Panc1 (cell line): ENCODE measurements at regions of chr12 and their contacts with region 1.

Region 1: DNA sequence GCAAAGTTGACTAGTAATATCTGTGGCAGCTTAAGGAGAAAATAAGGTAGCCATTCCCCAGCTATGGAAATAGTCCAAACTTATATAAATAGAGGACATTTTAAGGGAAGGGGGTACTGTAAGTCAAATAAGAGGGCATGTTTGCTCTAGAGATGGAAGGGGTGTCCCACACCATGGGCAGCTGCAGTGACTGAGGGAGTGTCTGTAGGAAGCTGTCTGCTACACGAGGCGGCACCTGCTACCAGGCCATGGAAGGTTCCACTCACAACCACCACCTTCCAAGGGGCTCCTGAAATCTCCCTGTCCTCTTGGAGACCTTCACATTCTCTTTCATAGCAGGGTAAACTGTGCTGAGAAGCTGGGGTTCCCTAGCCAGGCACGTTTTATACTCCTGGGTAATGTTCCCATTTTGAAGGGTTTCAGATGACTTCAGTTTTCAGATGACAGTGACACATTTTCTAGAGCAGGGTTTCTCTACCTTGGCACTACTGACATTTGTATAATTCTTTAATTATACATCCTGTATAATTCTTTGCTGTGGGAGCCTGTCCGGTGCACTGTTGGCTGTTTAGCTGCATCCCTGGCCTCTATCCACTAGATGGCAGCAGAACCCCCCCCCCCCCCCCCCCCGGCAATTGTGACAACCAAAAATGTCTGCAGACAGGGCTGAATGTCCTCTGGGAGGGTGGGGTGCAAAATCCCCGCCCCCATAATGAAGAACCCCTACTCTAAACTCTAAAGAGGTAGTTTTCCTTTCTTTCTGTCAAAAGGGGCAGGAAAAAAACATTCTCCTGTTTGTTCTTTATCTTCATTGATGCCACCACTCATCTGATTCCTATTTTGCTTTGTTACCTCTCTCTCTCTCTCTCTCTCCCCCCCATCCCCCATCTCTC is 11.6 kb upstream of the SMCO2 start:
- DNase-seq: no peak
- ATAC-seq: peak; percentile 89
- H3K4me3 ChIP-seq: no peak overlapping the region
- H3K27ac ChIP-seq: no peak overlapping the region
- H3K4me1 ChIP-seq: no peaks in the 10 kb centered on the region
- H3K27me3 ChIP-seq: no peaks in the 10 kb centered on the region
- CTCF ChIP-seq: peak; percentile 95

Region 2: DNA sequence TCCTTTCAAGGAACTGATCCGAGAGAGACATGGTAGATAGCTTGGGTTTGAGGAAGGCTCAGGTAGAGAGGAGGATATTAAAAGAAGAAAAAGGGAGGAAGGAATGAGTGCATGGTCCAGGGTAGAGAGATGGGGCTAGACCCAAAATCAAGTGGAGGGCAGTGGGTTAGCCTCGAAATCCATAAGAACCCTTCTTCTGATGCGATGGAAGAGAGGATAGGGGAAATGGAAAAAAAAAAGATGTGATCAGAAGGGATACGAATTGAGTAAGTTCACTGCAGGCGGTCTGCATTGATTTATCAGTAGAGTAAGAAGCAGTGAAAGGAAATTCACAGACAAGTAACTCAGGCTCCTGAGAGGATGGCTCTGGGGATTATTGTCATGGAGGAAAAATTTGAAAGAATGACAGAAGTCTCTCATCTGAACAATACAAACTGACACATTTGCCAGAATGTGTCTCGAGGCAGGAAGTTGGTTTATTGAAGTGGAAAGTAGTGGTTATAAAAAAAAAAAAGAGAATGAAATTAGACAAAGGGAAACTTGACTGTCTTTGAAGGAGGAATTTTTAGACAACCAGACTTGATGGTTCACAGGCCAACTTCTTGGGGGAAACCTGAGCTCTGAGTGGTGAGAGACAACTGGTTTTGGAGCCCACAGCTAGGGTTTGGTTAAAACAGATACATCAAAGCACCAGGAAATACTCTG is 99.3 kb after region 1 on chr12:
- CTCF ChIA-PET with region 1: no interaction called
- POLR2A ChIA-PET with region 1: no interaction called
- in situ Hi-C with region 1: no loop called
- intact Hi-C with region 1: no loop called
- DNase-seq: no peak
- ATAC-seq: no peak
- H3K4me3 ChIP-seq: no peak overlapping the region
- H3K27ac ChIP-seq: no peak overlapping the region
- H3K4me1 ChIP-seq: peaks cover 22% of the 10 kb centered on the region
- H3K27me3 ChIP-seq: no peaks in the 10 kb centered on the region
- CTCF ChIP-seq: no peak

Region 3: DNA sequence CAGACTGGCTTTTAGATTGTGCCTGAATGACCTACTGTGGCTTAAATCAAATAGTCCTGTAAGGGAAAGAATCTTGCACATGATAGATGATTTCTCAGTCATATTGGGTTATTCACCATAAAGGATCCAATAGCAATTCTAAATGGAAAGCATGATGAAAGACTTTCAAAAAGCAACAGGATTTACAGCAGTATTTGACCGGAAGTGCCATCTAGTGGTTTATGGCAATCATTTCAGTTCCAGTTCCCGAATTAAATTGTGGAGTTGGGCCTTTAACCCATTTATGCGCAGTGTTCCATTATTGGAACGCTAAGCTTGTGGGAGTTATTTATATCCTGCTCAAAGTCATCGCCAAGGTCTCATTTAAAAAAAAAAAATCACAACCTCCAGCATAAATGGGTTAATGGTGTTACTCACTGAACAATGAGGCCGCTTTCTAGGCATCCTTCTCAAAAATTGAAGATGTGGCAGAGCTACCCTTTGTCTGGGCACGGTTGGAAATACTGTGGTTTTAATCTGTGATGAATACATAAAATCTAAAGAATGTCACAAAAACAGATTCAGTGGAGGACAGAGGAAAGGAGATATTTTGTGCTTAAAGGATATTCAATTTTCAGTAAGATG is 200.5 kb after region 1 on chr12:
- CTCF ChIA-PET with region 1: interaction called, 5 read pairs
- POLR2A ChIA-PET with region 1: interaction called, 12 read pairs
- in situ Hi-C with region 1: no loop called
- intact Hi-C with region 1: no loop called
- DNase-seq: no peak
- ATAC-seq: peak; percentile 53
- H3K4me3 ChIP-seq: no peak overlapping the region
- H3K27ac ChIP-seq: peak overlapping the region; percentile 70; the same call in 1 of the 2 replicates
- H3K4me1 ChIP-seq: peaks cover 6% of the 10 kb centered on the region
- H3K27me3 ChIP-seq: no peaks in the 10 kb centered on the region
- CTCF ChIP-seq: peak; percentile 80

Region 4: DNA sequence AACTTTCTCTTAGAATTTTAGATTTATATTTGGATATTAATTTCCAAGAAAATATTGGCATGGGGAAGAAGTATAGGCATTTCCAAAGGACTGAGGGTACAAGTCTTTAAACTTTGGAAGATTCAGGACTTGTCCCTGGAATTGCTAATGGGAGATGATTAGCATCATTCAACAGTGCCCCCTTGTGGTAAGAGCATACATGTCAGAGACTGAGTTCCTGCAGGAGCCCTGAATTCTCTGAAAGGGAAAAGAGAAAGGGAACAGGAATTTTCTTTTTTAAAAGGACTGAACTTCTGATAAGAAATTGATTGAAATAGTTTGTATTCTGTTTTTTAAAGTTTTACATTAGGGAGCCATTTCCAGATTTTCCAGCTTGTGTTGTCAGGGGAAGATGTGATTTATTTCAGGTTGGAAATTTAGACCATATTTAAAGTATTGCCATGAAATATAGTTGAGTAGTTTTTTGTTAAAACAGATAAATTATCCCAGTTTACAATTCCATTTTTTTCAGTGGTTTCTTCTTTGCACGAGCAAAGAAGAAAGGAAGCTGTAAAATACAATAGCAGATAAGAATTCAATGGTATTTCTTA is 217.3 kb after region 1 on chr12:
- CTCF ChIA-PET with region 1: no interaction called
- POLR2A ChIA-PET with region 1: no interaction called
- in situ Hi-C with region 1: no loop called
- intact Hi-C with region 1: loop called (anchors 1 kb)
- DNase-seq: peak; percentile 69
- ATAC-seq: peak; percentile 95
- H3K4me3 ChIP-seq: no peak overlapping the region
- H3K27ac ChIP-seq: no peak overlapping the region
- H3K4me1 ChIP-seq: no peaks in the 10 kb centered on the region
- H3K27me3 ChIP-seq: no peaks in the 10 kb centered on the region
- CTCF ChIP-seq: peak; percentile 87; the same call in 1 of the 2 replicates

Region 5: DNA sequence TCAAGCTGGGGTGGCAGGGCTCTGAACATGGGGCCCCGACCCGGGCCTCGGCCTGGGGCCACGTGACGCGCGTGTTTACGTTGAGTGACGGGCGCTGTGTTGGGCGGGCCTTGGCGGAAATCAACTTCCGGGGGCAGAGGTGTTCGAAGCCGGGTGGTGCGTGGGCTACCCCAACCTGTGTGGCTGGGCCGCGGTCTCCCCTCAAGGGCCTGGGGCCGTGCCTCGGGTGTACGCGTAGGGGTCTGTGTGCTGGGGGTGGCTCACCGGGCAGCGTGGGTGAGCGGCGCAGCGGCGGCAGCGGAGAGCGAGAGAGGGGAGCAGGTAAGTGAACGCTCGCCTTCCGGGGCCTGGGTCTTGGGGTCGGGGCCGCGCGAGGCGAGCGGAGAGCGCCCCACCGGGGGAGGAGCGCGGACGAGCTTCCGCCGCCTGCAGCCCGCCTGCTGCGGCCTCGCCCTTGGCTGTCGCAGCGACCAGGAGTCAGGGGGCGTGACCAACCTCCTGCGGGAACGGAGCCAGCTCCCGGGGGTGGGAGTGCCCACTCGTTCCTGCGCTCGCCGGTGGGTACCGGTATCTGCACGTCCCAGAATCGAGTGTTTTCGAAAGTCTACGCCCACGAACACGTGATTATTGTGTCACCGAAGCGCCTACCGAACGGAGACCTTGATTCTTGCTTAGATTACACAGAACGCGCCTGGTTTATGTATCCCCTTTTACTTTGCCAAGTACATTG is 755.6 kb after region 1 on chr12 and contains the start of gene CCDC91:
- CTCF ChIA-PET with region 1: interaction called, 11 read pairs
- POLR2A ChIA-PET with region 1: no interaction called
- in situ Hi-C with region 1: no loop called
- intact Hi-C with region 1: no loop called
- DNase-seq: peak; percentile 72
- ATAC-seq: peak; percentile 98
- H3K4me3 ChIP-seq: peak within 1 kb of the TSS; percentile 71 to 97
- H3K27ac ChIP-seq: peak within 1 kb of the TSS; percentile 95
- H3K4me1 ChIP-seq: peaks cover 17% of the 10 kb centered on the region
- H3K27me3 ChIP-seq: no peaks in the 10 kb centered on the region
- CTCF ChIP-seq: no peak
- total RNA-seq, gene CCDC91: 26.9 TPM